ENCODE measurements at regions of chr1 and their contacts with region 1.

Region 1: GRCh38 chr1:178031856-178032320 is 62.0 kb upstream of the RASAL2 start:
- DNase-seq: peak; percentile 97
- H3K4me3 Mint-ChIP-seq: no peak overlapping the region
- H3K27ac Mint-ChIP-seq: no peak overlapping the region
- H3K4me1 Mint-ChIP-seq: no peaks in the 10 kb centered on the region
- H3K27me3 Mint-ChIP-seq: no peaks in the 10 kb centered on the region
- CTCF ChIP-seq: peak; percentile 92

Region 2: GRCh38 chr1:177209357-177209756 is 822.5 kb before region 1 on chr1:
- CTCF ChIA-PET with region 1: no interaction called
- POLR2A ChIA-PET with region 1: no interaction called
- intact Hi-C with region 1: no loop called
- DNase-seq: peak; percentile 100
- H3K4me3 Mint-ChIP-seq: peak overlapping the region; percentile 10
- H3K27ac Mint-ChIP-seq: peak overlapping the region; percentile 52
- H3K4me1 Mint-ChIP-seq: peaks cover 20% of the 10 kb centered on the region
- H3K27me3 Mint-ChIP-seq: no peaks in the 10 kb centered on the region
- CTCF ChIP-seq: no peak

Region 3: GRCh38 chr1:177998696-177999631 is 32.9 kb before region 1 on chr1:
- CTCF ChIA-PET with region 1: interaction called, 12 read pairs
- POLR2A ChIA-PET with region 1: no interaction called
- intact Hi-C with region 1: no loop called
- DNase-seq: no peak
- H3K4me3 Mint-ChIP-seq: no peak overlapping the region
- H3K27ac Mint-ChIP-seq: no peak overlapping the region
- H3K4me1 Mint-ChIP-seq: no peaks in the 10 kb centered on the region
- H3K27me3 Mint-ChIP-seq: no peaks in the 10 kb centered on the region
- CTCF ChIP-seq: no peak

Region 4: DNA sequence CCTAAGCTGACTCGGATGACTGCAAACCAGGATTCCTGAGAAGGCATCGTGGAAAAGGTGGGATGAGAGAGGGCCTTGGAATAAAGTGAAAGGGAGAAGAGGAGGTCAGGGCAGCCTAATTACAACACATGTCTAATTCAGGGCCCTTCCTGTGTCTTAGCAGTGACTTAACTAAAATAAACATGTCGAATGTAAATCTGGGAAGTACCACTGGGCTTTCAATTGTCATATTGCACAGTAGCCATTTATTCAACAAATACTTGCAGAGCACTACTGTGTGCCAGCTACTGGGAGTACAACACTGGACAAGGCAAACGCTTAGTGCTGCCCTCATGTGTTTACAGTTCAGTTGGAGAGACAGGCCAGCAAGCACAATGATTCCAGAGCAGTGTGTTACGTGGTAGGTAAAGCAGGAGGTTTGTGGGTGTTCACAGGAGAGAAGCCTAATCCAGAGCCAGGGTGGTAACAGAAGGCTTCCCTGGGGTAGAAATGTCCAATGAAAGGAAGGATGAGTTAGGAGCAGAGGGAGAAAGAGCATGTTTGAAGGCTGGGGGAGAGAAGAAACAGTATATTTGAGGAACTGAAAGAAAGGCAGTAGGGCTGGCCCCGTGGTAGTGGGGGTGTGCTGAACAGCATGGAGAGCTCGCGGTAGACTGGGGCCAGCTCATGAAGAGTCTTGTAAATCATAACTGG is 24.0 kb after region 1 on chr1:
- CTCF ChIA-PET with region 1: interaction called, 85 read pairs
- POLR2A ChIA-PET with region 1: no interaction called
- intact Hi-C with region 1: no loop called
- DNase-seq: peak; percentile 77
- H3K4me3 Mint-ChIP-seq: no peak overlapping the region
- H3K27ac Mint-ChIP-seq: peak overlapping the region; percentile 14
- H3K4me1 Mint-ChIP-seq: peaks cover 50% of the 10 kb centered on the region
- H3K27me3 Mint-ChIP-seq: no peaks in the 10 kb centered on the region
- CTCF ChIP-seq: no peak

Region 5: GRCh38 chr1:178189814-178190213 is 157.9 kb after region 1 on chr1:
- CTCF ChIA-PET with region 1: interaction called, 44 read pairs
- POLR2A ChIA-PET with region 1: interaction called, 5 read pairs
- intact Hi-C with region 1: loop called (anchors 5 kb)
- DNase-seq: peak; percentile 66
- H3K4me3 Mint-ChIP-seq: no peak overlapping the region
- H3K27ac Mint-ChIP-seq: no peak overlapping the region
- H3K4me1 Mint-ChIP-seq: peaks cover 31% of the 10 kb centered on the region
- H3K27me3 Mint-ChIP-seq: no peaks in the 10 kb centered on the region
- CTCF ChIP-seq: peak; percentile 39

Region 6: GRCh38 chr1:178262120-178262500 is 230.2 kb after region 1 on chr1:
- CTCF ChIA-PET with region 1: interaction called, 15 read pairs
- POLR2A ChIA-PET with region 1: no interaction called
- intact Hi-C with region 1: no loop called
- DNase-seq: no peak
- H3K4me3 Mint-ChIP-seq: no peak overlapping the region
- H3K27ac Mint-ChIP-seq: peak overlapping the region; percentile 21
- H3K4me1 Mint-ChIP-seq: peaks cover 12% of the 10 kb centered on the region
- H3K27me3 Mint-ChIP-seq: no peaks in the 10 kb centered on the region
- CTCF ChIP-seq: no peak

Region 7: DNA sequence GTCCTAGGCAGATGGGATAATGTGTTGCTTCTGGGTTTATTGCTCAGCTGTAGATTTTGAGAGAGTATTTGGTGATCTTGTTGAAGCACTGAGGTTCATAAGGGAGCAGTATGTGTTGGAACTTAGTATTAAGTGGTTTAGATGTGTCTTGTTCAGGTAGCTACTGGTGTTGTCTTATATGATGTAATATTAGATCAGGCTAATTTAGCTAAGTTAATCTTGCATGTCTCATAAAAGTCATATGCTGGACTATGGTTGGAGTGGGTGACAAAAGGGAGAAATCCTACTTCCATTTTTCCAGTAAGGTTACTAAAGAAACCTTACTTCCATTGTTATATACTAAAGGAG is 268.4 kb after region 1 on chr1:
- CTCF ChIA-PET with region 1: interaction called, 32 read pairs
- POLR2A ChIA-PET with region 1: no interaction called
- intact Hi-C with region 1: loop called (anchors 1 kb)
- DNase-seq: no peak
- H3K4me3 Mint-ChIP-seq: no peak overlapping the region
- H3K27ac Mint-ChIP-seq: peak overlapping the region; percentile 50
- H3K4me1 Mint-ChIP-seq: peaks cover 15% of the 10 kb centered on the region
- H3K27me3 Mint-ChIP-seq: no peaks in the 10 kb centered on the region
- CTCF ChIP-seq: no peak

Measured in MCF 10A (cell line).